WTC11 (cell line): ENCODE measurements at regions of chr17 and their contacts with region 1.

Region 1: GRCh38 chr17:41959336-41960095 is 7.1 kb upstream of the CNP start:
- DNase-seq: peak; percentile 61
- ATAC-seq: peak; percentile 84
- H3K4me3 Mint-ChIP-seq: no peak overlapping the region
- H3K27ac Mint-ChIP-seq: peak overlapping the region; percentile 73
- H3K4me1 Mint-ChIP-seq: peaks cover 30% of the 10 kb centered on the region
- H3K27me3 Mint-ChIP-seq: peaks cover 2% of the 10 kb centered on the region; the same call in 1 of the 2 replicates
- CTCF ChIP-seq: no peak

Region 2: DNA sequence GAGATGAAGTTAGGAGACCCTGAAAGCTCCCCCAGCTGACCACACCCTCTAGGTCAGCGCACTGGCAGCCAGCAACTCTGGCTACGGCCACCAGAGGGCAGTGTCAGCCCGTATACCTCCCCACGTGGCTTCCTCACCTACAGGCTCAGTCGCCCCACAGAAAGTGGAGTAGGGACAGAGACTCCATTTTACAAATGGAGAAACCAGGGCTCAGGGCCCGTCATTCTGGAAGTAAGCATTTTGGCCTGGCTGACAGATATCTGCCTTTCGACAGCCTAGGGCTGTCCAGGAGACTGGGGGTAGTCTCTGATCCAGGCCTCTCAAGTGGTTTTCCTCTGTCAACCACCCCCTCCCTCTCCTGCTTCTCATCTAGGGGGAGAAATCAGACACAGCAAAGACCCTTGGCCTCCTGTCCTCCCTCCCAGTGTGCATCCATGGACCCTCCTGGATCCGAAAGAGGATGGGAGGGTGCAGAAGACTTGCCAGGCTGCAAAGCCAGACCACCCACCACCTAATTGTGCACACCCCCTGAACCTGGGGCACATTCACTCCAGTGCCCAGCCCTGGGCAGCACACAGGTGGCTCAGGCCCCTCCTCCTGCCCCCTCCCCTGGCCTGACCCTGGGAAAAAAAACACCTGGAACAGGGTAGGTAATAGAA is 221.3 kb before region 1 on chr17:
- CTCF ChIA-PET with region 1: interaction called, 18 read pairs
- POLR2A ChIA-PET with region 1: no interaction called
- DNase-seq: peak; percentile 91
- ATAC-seq: peak; percentile 71
- H3K4me3 Mint-ChIP-seq: no peak overlapping the region
- H3K27ac Mint-ChIP-seq: peak overlapping the region; percentile 82
- H3K4me1 Mint-ChIP-seq: peaks cover 22% of the 10 kb centered on the region
- H3K27me3 Mint-ChIP-seq: peaks cover 47% of the 10 kb centered on the region
- CTCF ChIP-seq: peak; percentile 98

Region 3: GRCh38 chr17:41835800-41836549 is 123.5 kb before region 1 on chr17 and contains the start of gene NT5C3B:
- CTCF ChIA-PET with region 1: interaction called, 10 read pairs
- POLR2A ChIA-PET with region 1: no interaction called
- DNase-seq: peak; percentile 60
- ATAC-seq: peak; percentile 84
- H3K4me3 Mint-ChIP-seq: peak within 1 kb of the TSS; percentile 81
- H3K27ac Mint-ChIP-seq: no peak within 1 kb of the TSS
- H3K4me1 Mint-ChIP-seq: peaks cover 9% of the 10 kb centered on the region
- H3K27me3 Mint-ChIP-seq: peaks cover 14% of the 10 kb centered on the region
- CTCF ChIP-seq: no peak
- total RNA-seq, gene NT5C3B: 58.1 to 62.9 TPM (median 59.4 TPM) in 3 replicates

Region 4: GRCh38 chr17:41894791-41895331 is 64.7 kb before region 1 on chr17:
- CTCF ChIA-PET with region 1: interaction called, 13 read pairs
- POLR2A ChIA-PET with region 1: interaction called, 3 read pairs
- DNase-seq: no peak
- ATAC-seq: no peak
- H3K4me3 Mint-ChIP-seq: no peak overlapping the region
- H3K27ac Mint-ChIP-seq: no peak overlapping the region
- H3K4me1 Mint-ChIP-seq: no peaks in the 10 kb centered on the region
- H3K27me3 Mint-ChIP-seq: no peaks in the 10 kb centered on the region; the same call in 1 of the 2 replicates
- CTCF ChIP-seq: no peak

Region 5: DNA sequence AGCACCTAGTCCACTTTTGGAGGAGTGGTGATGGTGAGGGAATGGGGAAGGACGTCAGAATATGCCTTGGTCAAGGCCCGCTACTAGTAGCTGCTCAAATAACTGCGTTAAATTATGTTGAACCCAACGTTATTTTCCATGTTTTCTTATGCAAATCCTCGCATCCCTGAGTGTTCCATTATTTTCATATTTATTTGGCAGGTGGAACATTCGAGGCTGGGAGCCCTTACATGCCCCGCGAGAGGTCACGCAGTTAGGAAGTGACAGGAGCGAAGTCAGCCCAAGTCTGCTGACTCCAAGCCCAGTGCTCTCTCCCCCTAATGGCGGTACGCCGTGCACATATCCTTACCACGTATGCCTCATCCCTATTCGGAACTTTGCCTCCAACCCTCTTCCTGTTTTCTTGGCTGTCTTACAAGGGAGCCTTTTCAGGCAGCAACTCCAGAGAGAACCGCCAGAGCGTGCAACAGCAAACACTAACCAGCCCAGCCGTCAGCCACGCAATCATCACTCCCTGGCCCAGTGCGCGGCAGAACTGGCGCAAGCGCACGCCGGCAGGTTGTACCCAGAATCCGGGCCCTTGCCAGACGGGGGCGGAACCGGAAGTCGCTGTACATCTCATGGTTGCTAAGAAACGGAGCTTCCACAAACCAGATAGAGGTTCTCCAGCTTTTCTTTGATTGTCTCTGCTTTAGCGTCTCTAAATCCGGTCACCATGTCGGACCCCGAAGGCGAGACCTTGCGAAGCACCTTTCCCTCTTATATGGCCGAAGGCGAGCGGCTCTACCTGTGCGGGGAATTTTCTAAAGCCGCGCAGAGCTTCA is 29.3 kb before region 1 on chr17 and contains the start of gene ODAD4:
- CTCF ChIA-PET with region 1: interaction called, 56 read pairs
- POLR2A ChIA-PET with region 1: interaction called, 4 read pairs
- DNase-seq: peak; percentile 95
- ATAC-seq: peak; percentile 99
- H3K4me3 Mint-ChIP-seq: peak within 1 kb of the TSS; percentile 96
- H3K27ac Mint-ChIP-seq: peak within 1 kb of the TSS; percentile 99
- H3K4me1 Mint-ChIP-seq: peaks cover 14% of the 10 kb centered on the region
- H3K27me3 Mint-ChIP-seq: no peaks in the 10 kb centered on the region; the same call in 1 of the 2 replicates
- CTCF ChIP-seq: no peak
- total RNA-seq, gene ODAD4: 1.2 to 2.1 TPM (median 1.9 TPM) in 3 replicates

Region 6: GRCh38 chr17:42120770-42121769 is 161.6 kb after region 1 on chr17 and contains the start of gene KAT2A:
- CTCF ChIA-PET with region 1: interaction called, 12 read pairs
- POLR2A ChIA-PET with region 1: no interaction called
- DNase-seq: peak; percentile 85
- ATAC-seq: peak; percentile 73
- H3K4me3 Mint-ChIP-seq: peak within 1 kb of the TSS; percentile 69
- H3K27ac Mint-ChIP-seq: 0 out of 2 replicates have a peak within 1 kb of the TSS, but pooled peaks have one; percentile 19
- H3K4me1 Mint-ChIP-seq: peaks cover 31% of the 10 kb centered on the region
- H3K27me3 Mint-ChIP-seq: no peaks in the 10 kb centered on the region
- CTCF ChIP-seq: no peak
- total RNA-seq, gene KAT2A: 44.8 to 54.0 TPM (median 52.7 TPM) in 3 replicates

Region 7: GRCh38 chr17:42212382-42212781 is 252.9 kb after region 1 on chr17:
- CTCF ChIA-PET with region 1: no interaction called
- POLR2A ChIA-PET with region 1: no interaction called
- DNase-seq: no peak
- ATAC-seq: no peak
- H3K4me3 Mint-ChIP-seq: no peak overlapping the region
- H3K27ac Mint-ChIP-seq: no peak overlapping the region
- H3K4me1 Mint-ChIP-seq: no peaks in the 10 kb centered on the region
- H3K27me3 Mint-ChIP-seq: no peaks in the 10 kb centered on the region
- CTCF ChIP-seq: no peak